ENCODE measurements at regions of chr17 and their contacts with region 1.

Region 1: DNA sequence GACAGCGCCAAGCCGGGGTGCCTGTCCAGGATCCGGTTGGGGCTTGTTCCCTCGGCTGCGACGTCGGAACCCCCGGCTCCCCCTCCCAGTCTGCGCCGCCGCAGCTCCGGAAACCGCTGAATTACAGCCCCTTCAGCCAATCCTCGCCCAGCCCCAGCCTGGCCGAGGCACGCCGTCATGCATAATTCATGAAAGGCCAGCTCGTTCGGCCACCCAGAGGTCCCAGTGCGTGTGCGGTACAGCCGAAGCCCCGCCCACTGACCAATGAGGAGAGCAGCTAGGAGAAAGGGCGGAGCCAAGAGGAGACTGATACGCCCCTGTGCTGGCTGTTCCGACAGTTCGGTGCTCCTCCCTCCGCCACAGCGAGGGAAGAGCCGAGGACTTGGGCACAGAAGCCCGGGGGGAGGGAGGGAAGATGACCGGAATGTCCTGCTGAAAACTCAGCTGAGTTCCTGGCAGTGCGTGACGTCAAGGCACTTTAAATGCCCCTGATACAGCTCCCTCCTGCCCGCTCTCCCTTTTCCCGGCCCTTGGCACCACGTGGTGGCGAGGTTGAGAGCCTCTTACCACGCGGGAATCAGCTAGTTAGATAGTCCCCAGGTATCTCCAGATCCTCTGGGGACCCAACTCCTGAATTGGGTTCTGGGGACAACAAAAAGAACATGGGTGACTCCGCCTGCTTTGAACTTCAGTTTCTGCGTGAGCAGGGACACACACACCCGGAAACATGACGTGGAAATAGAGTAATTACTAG is at the start of gene STAT3:
- DNase-seq: peak; percentile 97
- H3K4me3 ChIP-seq: peak within 1 kb of the TSS; percentile 80 to 93
- H3K27ac ChIP-seq: peak within 1 kb of the TSS; percentile 87 to 94
- H3K4me1 ChIP-seq: peaks cover 0 to 12% of the 10 kb centered on the region in 2 experiments; a peak in 2 of 4 replicates
- H3K27me3 ChIP-seq: no peaks in the 10 kb centered on the region
- CTCF ChIP-seq: no peak; the same call in 1 of the 2 replicates
- EP300 ChIP-seq: peak; percentile 100
- RAD21 ChIP-seq: no peak
- polyA plus RNA-seq, gene STAT3: 35.7 and 38.7 TPM in 2 replicates

Region 2: DNA sequence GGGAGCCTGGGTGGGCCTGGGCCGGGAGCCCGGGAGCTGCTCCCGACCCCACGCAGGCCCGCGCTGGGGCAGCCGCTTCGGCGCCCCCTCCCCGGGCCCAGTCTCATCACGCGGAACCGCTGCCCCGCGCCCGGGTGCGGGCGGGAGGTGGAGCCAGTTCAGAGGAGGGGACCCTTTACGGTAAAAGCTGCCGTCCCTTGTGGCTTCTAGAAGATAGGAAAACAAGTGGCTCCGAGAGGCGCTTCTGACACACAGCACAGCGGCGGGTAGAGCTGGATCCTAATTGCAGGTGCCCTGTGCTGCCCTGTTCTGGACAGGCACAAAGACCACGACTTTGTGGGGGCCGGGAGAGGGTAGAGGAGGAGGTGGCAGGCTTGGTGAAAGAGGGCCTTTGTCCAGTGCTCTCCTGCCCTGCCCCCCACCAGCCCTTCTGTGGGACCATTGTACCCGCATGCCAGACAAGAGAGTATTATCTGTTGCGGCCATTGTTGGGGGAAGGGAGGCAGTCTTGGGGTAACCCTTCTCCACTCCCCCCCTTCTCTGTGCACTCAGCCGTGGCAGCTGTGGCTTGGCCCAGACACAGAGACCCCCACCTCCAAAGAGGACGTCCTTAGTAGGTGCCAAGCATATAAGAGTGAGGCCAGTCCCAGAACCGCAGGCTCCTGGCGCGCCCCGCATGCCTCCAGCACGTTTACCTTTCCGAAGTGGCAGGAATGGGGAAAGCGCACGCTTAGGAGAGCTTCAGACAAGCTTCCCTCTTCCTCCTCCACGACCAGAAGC is 421.2 kb before region 1 on chr17:
- CTCF ChIA-PET with region 1: no interaction called
- POLR2A ChIA-PET with region 1: no interaction called
- DNase-seq: peak; percentile 48
- H3K4me3 ChIP-seq: peak overlapping the region; percentile 93 to 96
- H3K27ac ChIP-seq: peak overlapping the region; percentile 65 to 89
- H3K4me1 ChIP-seq: peaks cover 5 to 41% of the 10 kb centered on the region in 2 experiments; a peak in 2 of 4 replicates
- H3K27me3 ChIP-seq: no peaks in the 10 kb centered on the region
- CTCF ChIP-seq: no peak
- EP300 ChIP-seq: no peak
- RAD21 ChIP-seq: no peak

Region 3: GRCh38 chr17:42312285-42313130 is 76.0 kb before region 1 on chr17:
- CTCF ChIA-PET with region 1: interaction called, 683 read pairs
- POLR2A ChIA-PET with region 1: interaction called, 4 read pairs
- DNase-seq: peak; percentile 93
- H3K4me3 ChIP-seq: no peak overlapping the region; a peak in 1 of 4 replicates
- H3K27ac ChIP-seq: peak overlapping the region in 1 of 2 experiments; percentile 51; a peak in 2 of 4 replicates
- H3K4me1 ChIP-seq: peaks cover 0 to 15% of the 10 kb centered on the region in 2 experiments; a peak in 2 of 4 replicates
- H3K27me3 ChIP-seq: no peaks in the 10 kb centered on the region
- CTCF ChIP-seq: peak; percentile 65
- EP300 ChIP-seq: peak in 1 of 2 experiments; percentile 2; a peak in 1 of 4 replicates
- RAD21 ChIP-seq: peak; percentile 70

Region 4: GRCh38 chr17:42399948-42400843 is 11.6 kb after region 1 on chr17:
- CTCF ChIA-PET with region 1: interaction called, 16 read pairs
- POLR2A ChIA-PET with region 1: interaction called, 3 read pairs
- DNase-seq: no peak
- H3K4me3 ChIP-seq: no peak overlapping the region
- H3K27ac ChIP-seq: peak overlapping the region in 1 of 2 experiments; percentile 33; a peak in 2 of 4 replicates
- H3K4me1 ChIP-seq: 0 out of 4 replicates have a peak, but pooled peaks cover 0 to 3% of the 10 kb centered on the region in 2 experiments
- H3K27me3 ChIP-seq: no peaks in the 10 kb centered on the region
- CTCF ChIP-seq: no peak
- EP300 ChIP-seq: no peak
- RAD21 ChIP-seq: no peak